ENCODE measurements at regions of chr22 and their contacts with region 1.

Region 1: DNA sequence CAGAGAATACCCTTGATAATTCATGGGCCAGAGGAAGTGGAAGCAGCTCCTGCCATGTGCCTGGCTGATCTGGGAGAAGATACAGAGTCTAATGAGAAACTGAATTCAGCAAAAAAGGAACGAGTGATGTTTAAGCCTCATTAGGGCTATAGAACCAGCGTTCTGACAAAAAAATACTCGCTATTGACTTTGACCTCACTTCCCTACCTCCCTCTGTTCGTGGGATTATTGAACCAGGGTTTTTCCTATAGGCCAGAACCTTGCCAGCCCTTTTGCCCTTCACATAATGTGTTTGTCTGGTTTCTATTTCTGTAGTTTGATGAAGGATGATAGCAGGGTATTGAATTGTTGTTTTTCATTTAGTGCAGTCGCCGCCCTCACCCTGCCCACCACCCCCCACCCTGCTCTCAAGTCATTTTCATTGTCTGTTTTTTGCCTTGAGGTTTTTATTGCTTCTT is 7.6 kb upstream of the RBFOX2 start:
- DNase-seq: no peak
- ATAC-seq: peak in 3 of 4 donors; percentile 17 to 26 (median 22)
- H3K4me3 ChIP-seq: no peak overlapping the region
- H3K27ac ChIP-seq: no peak overlapping the region
- H3K4me1 ChIP-seq: no peaks in the 10 kb centered on the region
- H3K27me3 ChIP-seq: no peaks in the 10 kb centered on the region
- CTCF ChIP-seq: no peak

Region 2: DNA sequence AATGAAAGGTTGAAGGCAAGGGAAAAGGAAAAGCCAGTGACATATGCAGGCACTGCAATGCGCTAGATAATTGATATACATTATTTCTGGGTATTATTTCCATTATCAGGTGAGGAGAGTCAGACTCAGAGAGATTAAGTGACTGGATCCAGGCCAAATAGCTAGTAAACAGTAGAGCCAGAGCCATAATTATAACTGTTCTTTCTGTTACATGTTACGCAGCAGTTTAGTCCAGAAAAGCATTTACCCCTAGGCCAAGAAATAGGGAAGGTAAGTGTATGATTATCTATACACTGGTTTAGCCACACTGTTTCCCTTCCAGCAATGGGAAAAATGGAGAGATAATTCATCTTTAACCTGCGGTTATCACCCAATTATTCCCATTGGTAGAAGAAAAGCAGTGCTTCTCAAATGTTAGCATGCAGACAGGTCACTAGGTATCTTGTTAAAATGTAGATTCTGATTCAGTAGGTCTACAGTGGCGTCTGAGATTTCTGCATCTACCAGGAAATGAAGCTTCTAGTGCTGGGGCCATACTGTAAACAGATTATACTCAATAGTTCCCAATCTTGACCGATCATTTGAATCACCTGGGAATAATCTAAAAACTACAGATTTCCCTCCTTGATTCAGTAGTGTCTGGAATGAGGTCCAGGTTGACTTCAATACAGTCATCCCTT is 76.9 kb before region 1 on chr22:
- intact Hi-C with region 1: no loop called
- DNase-seq: no peak
- ATAC-seq: peak in 3 of 4 donors; percentile 17 to 46 (median 28)
- H3K4me3 ChIP-seq: no peak overlapping the region
- H3K27ac ChIP-seq: no peak overlapping the region
- H3K4me1 ChIP-seq: peaks cover 0 to 9% (median 8%) of the 10 kb centered on the region in 3 donors
- H3K27me3 ChIP-seq: no peaks in the 10 kb centered on the region
- CTCF ChIP-seq: no peak

Region 3: GRCh38 chr22:36055376-36056295 is 19.4 kb after region 1 on chr22:
- intact Hi-C with region 1: loop called in 1 of 3 experiments (anchors 2 kb)
- DNase-seq: no peak
- ATAC-seq: no peak
- H3K4me3 ChIP-seq: no peak overlapping the region
- H3K27ac ChIP-seq: no peak overlapping the region
- H3K4me1 ChIP-seq: peaks cover 0 to 9% (median 0%) of the 10 kb centered on the region in 3 donors
- H3K27me3 ChIP-seq: no peaks in the 10 kb centered on the region
- CTCF ChIP-seq: no peak

Measured in pancreas (tissue), 10 donors.